ENCODE measurements at regions of chr18 and their contacts with region 1.

Region 1: DNA sequence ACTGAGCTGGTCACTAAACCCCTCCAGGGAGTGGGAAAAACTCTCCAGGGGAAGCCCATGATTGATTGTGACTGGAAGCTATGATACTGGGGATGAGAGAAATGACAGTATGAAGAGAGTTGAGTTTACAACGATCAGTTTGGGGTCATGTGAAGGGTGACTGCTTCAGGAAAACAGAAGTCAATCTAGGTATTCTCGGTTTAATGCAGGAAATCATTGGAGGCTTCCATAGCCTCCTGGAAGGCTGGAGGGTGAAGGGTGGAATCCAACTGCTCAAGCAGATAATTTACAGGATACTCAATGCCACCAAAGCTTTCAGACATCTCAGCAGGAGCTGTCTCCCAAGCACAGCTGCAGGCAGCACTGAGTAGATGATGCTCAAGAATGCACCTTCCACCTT is 154.6 kb downstream of the ZNF516 start:
- DNase-seq: no peak
- H3K4me3 ChIP-seq: no peak overlapping the region
- H3K27ac ChIP-seq: no peak overlapping the region
- H3K4me1 ChIP-seq: peaks cover 2% of the 10 kb centered on the region
- H3K27me3 ChIP-seq: no peaks in the 10 kb centered on the region
- CTCF ChIP-seq: no peak
- EP300 ChIP-seq: no peak
- POLR2A ChIP-seq: no peak

Region 2: DNA sequence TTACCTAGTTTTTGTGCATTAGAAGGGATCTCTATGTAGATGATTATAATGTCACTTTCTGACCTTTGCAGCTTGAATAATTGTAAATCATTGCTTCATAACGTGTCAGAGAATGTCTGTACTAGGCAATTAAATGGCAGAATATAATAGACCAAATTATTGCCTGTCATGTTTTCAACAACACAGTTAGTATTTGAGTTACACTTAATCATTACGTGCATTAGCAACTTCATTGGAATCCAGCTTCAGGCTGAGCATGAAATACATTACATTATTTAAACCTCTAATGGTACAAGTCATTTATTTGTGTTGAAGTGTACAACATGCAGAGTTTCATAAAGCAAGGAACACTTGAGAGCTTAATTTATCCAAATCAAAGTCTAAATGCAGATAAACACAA is 1694.7 kb before region 1 on chr18:
- intact Hi-C with region 1: loop called in 1 of 4 experiments (anchors 5 kb)
- DNase-seq: no peak
- H3K4me3 ChIP-seq: no peak overlapping the region
- H3K27ac ChIP-seq: no peak overlapping the region
- H3K4me1 ChIP-seq: no peaks in the 10 kb centered on the region
- H3K27me3 ChIP-seq: no peaks in the 10 kb centered on the region
- CTCF ChIP-seq: no peak
- EP300 ChIP-seq: no peak
- POLR2A ChIP-seq: no peak

Region 3: DNA sequence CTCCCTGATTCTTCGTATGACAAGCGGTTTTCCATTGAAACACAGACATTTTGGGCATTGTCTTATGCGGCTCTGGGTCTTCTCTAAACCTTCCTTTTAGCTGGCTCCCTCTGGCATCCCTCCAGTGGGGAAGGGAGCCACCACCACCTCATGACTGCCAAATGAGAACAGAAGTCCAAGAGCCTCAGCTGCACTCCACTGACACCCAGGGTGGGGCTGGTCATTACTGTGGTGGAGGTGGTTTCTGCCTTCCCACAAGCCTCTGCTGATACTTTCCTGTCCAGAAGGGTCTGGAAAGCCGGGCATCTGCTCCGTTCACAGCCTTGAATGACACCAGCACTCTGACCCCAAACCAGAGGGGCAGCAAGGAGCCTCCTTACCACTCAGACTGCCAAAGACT is 58.8 kb before region 1 on chr18:
- intact Hi-C with region 1: no loop called
- DNase-seq: no peak
- H3K4me3 ChIP-seq: no peak overlapping the region
- H3K27ac ChIP-seq: no peak overlapping the region
- H3K4me1 ChIP-seq: no peaks in the 10 kb centered on the region
- H3K27me3 ChIP-seq: no peaks in the 10 kb centered on the region
- CTCF ChIP-seq: no peak
- EP300 ChIP-seq: no peak
- POLR2A ChIP-seq: no peak

Measured in ovary (tissue), 10 donors.